GM18951 (cell line): ENCODE measurements at regions of chr2 and their contacts with region 1.

Region 1: GRCh38 chr2:25131567-25132298 is 36.6 kb downstream of the POMC start:
- POLR2A ChIP-seq: no peak

Region 2: GRCh38 chr2:24409700-24410556 is 721.8 kb before region 1 on chr2:
- in situ Hi-C with region 1: loop called (anchors 25 kb)
- POLR2A ChIP-seq: no peak

Region 3: GRCh38 chr2:24984912-24985311 is 146.8 kb before region 1 on chr2:
- in situ Hi-C with region 1: loop called (anchors 10 kb)
- POLR2A ChIP-seq: no peak